ENCODE measurements at regions of chr5 and their contacts with region 1.

Region 1: DNA sequence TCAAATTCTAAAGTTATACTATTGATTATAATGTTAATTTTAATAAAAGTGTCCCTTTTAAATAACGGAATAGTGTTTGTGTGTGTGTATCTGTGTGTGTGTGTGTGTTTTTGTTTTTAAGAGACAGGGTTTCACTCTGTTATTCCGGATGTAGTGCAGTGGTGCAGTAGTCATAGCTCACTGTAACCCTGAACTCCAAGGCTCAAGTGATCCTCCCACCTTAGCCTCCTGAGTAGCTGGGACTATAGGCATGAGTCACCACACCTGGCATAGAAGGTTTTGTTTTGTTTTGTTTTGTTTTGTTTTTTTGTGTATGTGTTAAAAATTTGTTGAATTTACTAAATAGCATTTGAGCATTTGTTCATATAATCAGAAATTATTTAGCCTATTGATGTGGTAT is 64.6 kb downstream of the YTHDC2 start:
- DNase-seq: no peak
- H3K4me3 ChIP-seq: no peak overlapping the region
- H3K27ac ChIP-seq: no peak overlapping the region
- H3K4me1 ChIP-seq: no peaks in the 10 kb centered on the region
- CTCF ChIP-seq: no peak

Region 2: DNA sequence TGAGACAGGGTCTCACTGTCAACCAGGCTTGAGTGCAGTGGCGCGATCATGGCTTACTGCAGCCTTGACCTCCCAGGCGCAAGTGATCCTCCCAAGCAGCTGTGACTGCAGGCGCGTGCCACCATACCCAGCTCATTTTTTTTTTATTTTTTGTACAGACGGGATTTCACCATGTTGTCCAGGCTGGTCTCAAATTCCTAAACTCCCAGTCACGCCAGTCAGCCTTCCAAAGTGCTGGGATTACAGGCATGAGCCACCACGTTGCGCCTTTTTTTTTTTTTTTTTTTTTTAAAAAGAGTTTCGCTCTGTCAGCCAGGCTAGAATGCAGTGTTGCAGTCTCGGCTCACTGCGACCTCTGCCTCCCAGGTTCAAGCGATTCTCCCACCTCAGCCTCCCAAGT is 744.1 kb before region 1 on chr5:
- CTCF ChIA-PET with region 1: no interaction called
- POLR2A ChIA-PET with region 1: no interaction called
- intact Hi-C with region 1: no loop called
- DNase-seq: no peak
- H3K4me3 ChIP-seq: no peak overlapping the region
- H3K27ac ChIP-seq: no peak overlapping the region
- H3K4me1 ChIP-seq: no peaks in the 10 kb centered on the region
- CTCF ChIP-seq: no peak

Region 3: GRCh38 chr5:113538313-113538712 is 39.8 kb before region 1 on chr5:
- CTCF ChIA-PET with region 1: no interaction called
- POLR2A ChIA-PET with region 1: no interaction called
- intact Hi-C with region 1: loop called (anchors 5 kb)
- DNase-seq: no peak
- H3K4me3 ChIP-seq: no peak overlapping the region
- H3K27ac ChIP-seq: no peak overlapping the region
- H3K4me1 ChIP-seq: no peaks in the 10 kb centered on the region
- CTCF ChIP-seq: no peak